A673 (cell line): ENCODE measurements at regions of chr13 and their contacts with region 1.

Region 1: DNA sequence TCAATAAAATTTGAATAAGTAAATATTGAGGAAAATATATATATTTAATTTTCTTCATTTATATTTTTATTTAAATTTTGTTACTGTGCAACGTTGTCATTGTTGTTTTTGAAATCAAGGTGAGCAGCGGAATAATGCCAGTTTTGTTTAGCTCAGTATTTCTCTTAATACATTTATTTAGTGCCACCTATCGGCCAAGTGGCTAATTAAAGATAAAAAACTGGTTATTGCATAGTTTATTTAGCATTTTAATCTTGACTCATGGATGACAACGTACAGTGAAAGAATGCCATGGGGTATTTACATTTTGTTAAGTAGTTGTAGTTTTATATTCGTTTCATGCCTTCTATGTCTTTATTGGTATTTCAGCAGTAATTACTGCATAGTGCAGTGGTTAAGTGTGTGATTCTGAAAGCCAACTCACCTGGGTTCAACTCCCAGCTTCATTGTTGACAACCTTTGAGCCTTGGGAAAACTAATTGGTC is 265.9 kb downstream of the MYO16 start:
- DNase-seq: peak; percentile 74
- H3K4me3 ChIP-seq: no peak overlapping the region
- H3K27ac ChIP-seq: no peak overlapping the region
- H3K4me1 ChIP-seq: peaks cover 13% of the 10 kb centered on the region
- H3K27me3 ChIP-seq: no peaks in the 10 kb centered on the region
- CTCF ChIP-seq: peak; percentile 64

Region 2: GRCh38 chr13:108227651-108228272 is 667.5 kb before region 1 on chr13:
- CTCF ChIA-PET with region 1: no interaction called
- POLR2A ChIA-PET with region 1: no interaction called
- intact Hi-C with region 1: loop called (anchors 2 kb)
- DNase-seq: peak; percentile 65
- H3K4me3 ChIP-seq: no peak overlapping the region
- H3K27ac ChIP-seq: no peak overlapping the region
- H3K4me1 ChIP-seq: peaks cover 12% of the 10 kb centered on the region
- H3K27me3 ChIP-seq: no peaks in the 10 kb centered on the region
- CTCF ChIP-seq: peak; percentile 81

Region 3: DNA sequence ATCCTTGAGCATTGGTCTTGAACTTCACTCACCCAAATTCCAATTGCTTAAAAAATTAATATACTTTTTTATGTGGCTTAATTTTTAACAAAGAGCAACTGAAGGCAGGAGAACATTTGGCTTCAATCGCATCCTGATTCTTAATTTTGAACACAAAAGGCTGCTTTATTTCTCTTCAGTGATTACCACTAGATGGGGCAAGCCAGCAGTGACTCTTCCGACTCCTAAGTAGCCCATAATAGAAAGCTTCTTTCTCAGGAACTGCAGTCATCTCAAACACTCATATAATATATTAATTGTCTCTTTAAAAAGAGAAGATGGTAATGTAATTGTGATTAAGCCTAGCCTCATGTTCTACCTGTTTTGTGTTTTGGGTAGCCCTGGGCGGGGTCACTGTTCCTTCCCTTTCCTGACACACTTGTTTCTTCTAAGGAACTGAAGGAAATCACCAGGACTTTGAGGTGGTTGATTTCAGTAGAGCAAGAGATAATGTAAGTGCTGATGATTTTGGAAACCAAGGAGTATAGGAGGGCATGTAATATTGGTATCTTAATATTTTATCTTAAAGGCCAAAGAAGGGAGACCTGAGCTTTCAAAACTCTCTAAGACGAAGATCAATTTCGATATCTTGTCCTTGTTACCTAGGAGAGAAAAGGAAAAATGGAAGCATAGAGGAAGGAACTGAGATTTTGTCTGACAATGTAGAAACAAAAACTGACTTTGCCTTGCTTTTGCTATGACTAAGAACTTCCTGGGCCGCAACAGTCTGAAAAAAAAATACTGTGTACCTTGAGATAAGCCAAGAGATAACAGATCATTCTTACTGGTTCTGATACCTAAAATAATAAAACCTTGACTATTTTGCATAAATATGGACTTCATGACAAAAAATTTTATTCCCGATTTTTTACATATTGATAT is 552.6 kb before region 1 on chr13:
- CTCF ChIA-PET with region 1: interaction called, 4 read pairs
- POLR2A ChIA-PET with region 1: no interaction called
- intact Hi-C with region 1: loop called (anchors 1 kb)
- DNase-seq: peak; percentile 58
- H3K4me3 ChIP-seq: no peak overlapping the region
- H3K27ac ChIP-seq: no peak overlapping the region
- H3K4me1 ChIP-seq: no peaks in the 10 kb centered on the region
- H3K27me3 ChIP-seq: no peaks in the 10 kb centered on the region
- CTCF ChIP-seq: peak; percentile 71

Region 4: GRCh38 chr13:108566413-108567170 is 328.7 kb before region 1 on chr13:
- CTCF ChIA-PET with region 1: no interaction called
- POLR2A ChIA-PET with region 1: no interaction called
- intact Hi-C with region 1: loop called (anchors 2 kb)
- DNase-seq: peak; percentile 61
- H3K4me3 ChIP-seq: no peak overlapping the region
- H3K27ac ChIP-seq: peak overlapping the region; percentile 58
- H3K4me1 ChIP-seq: peaks cover 7% of the 10 kb centered on the region
- H3K27me3 ChIP-seq: no peaks in the 10 kb centered on the region
- CTCF ChIP-seq: no peak

Region 5: DNA sequence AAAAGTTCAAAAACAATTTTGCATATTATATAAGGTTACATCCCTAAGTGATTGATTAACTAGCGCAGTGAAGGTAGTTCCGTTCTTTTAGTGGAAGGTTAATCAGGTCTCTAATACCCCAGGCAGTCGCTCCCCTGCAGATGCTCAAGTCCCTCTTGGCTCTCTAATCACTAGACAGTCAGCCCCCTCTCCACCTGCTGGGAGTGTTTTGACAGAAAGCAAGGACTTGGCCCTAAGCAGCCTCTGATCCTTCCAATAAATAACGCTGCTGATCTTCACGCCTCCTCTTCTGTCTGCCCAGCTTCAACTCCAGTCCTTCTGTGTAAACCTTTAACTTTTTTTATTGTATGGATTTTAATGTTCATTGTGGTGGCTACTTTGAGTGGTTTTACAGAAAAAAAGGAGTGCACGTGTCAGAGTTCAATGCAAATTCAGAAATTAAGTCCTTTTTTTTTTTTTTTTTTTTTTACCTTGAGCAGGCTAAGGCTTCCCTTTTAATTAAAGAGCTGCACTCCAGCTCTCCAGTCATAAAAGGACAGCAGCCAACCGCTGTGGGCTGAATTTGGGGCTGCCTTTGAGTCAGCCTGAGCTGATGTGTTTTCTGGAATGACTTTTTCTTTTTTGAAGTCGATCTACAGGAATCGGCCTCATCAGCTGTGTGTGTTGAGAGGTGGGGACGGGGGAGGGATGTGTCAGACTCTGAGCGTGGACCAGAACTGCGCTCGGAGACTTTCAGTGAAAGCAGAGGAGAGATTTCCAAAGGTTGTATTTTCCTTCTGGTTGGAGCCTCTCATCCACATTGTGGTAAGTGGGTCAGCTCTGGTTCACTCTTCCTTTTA is 299.6 kb before region 1 on chr13:
- CTCF ChIA-PET with region 1: no interaction called
- POLR2A ChIA-PET with region 1: no interaction called
- intact Hi-C with region 1: no loop called
- DNase-seq: no peak
- H3K4me3 ChIP-seq: no peak overlapping the region
- H3K27ac ChIP-seq: no peak overlapping the region
- H3K4me1 ChIP-seq: no peaks in the 10 kb centered on the region
- H3K27me3 ChIP-seq: no peaks in the 10 kb centered on the region
- CTCF ChIP-seq: no peak